MCF 10A (cell line): ENCODE measurements at regions of chr11 and their contacts with region 1.

Region 1: DNA sequence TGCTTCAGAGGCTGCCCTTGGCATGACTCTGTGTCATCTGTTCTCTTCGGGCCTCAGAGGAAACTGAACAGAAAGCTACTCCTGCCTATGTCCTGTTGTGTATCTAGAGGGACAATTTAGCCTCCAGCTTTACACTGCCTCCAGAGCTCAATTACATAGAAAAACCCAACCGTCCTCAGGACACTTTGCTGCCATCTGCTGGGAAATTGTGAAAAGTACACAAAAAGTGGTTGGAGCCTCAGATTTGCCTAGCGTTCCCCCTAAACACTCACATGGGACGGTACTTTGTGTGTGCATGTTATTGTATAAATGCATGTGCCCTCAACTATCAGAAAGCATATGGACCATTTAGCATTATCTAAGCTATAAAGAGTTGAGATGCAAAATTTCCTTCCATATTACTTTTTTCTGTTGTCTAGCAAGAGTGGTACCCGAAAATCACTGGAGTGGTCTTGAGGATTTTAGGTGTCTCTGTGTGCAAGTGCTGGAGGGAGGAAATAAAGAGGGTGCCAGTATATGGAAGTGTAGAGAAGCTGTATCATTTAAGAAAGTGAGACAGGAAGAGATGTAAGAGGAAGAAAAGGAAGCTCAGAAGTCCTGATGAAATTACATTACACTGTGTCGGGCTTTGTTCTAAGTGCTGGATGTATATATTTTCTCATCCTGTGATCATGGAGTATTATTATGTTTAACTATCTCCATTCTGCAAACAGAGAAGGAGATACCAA is 8.7 kb upstream of the MS4A4E start:
- DNase-seq: peak; percentile 18
- H3K4me3 Mint-ChIP-seq: no peak overlapping the region
- H3K27ac Mint-ChIP-seq: no peak overlapping the region
- H3K4me1 Mint-ChIP-seq: no peaks in the 10 kb centered on the region
- H3K27me3 Mint-ChIP-seq: peaks cover 44% of the 10 kb centered on the region
- CTCF ChIP-seq: no peak

Region 2: DNA sequence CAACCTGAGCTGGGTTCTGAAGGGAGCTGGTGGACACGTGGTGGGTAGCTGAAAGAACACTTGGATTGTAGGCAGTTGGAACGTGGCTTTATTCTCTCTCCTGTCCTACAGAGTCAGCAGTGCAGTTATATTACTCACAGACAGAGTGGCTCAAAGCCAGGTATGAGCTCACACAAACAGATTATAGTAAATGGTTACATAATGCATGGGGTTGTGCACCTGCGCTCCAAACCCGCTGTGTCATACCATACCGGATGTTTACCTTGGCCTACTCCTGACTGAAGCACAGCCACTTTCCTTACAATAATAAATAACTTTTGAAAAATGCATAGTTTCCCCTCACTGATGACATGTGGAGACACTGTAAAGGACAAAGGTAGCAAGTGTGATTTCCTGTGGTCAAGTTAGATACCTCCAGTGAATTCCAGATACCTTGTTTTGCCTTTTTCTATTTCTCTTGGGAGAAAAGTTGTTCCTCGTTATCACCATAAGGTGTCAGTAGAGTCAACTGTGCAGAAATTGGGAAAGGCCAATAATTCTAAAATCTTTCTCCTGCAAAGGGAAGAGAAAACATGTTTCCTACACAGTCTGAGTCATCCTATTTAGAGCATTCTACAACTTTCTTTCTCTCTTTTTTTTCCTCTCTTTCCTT is 82.3 kb before region 1 on chr11:
- CTCF ChIA-PET with region 1: interaction called, 36 read pairs
- POLR2A ChIA-PET with region 1: interaction called, 3 read pairs
- intact Hi-C with region 1: loop called (anchors 1 kb)
- DNase-seq: peak; percentile 98
- H3K4me3 Mint-ChIP-seq: no peak overlapping the region
- H3K27ac Mint-ChIP-seq: peak overlapping the region; percentile 80
- H3K4me1 Mint-ChIP-seq: peaks cover 22% of the 10 kb centered on the region
- H3K27me3 Mint-ChIP-seq: no peaks in the 10 kb centered on the region
- CTCF ChIP-seq: peak; percentile 76